Breast epithelium (tissue), 4 donors: ENCODE measurements at regions of chr10 and their contacts with region 1.

Region 1: DNA sequence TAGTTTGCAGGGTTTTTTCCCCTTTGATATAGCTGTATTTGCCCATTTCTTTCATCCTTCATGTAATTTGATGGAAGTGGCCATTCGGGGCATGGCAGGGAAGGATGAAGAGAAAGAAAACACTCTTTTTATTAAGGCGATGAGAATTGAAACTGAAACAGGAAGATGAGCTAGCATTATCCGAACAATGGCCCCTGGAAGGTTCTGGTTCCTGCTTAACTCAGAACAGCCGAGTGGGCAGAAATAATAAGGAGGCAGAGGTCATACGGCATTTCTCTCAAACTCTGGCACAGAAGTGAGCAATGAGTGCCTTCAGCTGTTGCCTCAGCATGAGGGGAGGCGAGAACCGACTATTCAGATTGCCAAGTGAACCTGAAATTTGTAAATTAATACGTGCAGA is 113.2 kb upstream of the MYO3A start:
- DNase-seq: no peak
- H3K4me3 ChIP-seq: peak overlapping the region in 2 of 3 donors; percentile 12 to 43
- H3K27ac ChIP-seq: no peak overlapping the region
- H3K4me1 ChIP-seq: no peaks in the 10 kb centered on the region
- H3K27me3 ChIP-seq: no peaks in the 10 kb centered on the region
- CTCF ChIP-seq: no peak
- POLR2A ChIP-seq: no peak

Region 2: DNA sequence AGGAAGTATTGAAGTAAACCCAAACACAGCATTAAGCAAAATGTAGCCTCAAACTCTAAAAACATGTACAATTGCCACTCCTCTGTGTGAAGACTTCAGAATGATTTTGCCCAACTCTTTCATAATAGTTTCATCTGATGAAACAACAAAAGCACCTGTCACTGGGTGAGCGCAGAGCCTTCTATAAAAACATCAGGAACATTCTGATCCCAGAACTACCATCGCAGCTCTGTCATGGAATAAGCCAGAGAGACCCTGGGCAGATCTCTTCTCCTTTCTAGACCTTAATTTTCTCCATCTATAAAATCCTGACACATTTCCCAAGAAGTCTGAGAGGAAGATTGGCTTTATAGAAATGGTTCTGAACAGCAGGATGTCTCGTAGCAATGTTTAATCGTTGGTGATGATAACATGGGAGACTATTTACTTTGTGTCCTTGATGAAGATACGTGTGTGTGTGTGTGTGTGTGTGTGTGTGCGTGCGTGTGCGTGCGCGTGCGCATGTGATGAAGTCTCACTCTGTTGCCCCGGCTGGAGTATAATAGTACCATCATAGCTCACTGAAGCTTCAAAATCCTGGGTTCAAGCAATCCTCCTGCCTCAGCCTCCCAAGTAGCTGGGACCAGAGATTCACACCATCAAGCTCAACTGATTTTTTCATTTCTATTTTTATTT is 1413.9 kb before region 1 on chr10:
- intact Hi-C with region 1: loop called (anchors 10 kb)
- DNase-seq: no peak
- H3K4me3 ChIP-seq: no peak overlapping the region
- H3K27ac ChIP-seq: peak overlapping the region in 1 of 2 donors; percentile 29
- H3K4me1 ChIP-seq: no peaks in the 10 kb centered on the region
- H3K27me3 ChIP-seq: no peaks in the 10 kb centered on the region
- CTCF ChIP-seq: no peak
- POLR2A ChIP-seq: no peak

Region 3: GRCh38 chr10:25615926-25616325 is 204.9 kb before region 1 on chr10:
- intact Hi-C with region 1: no loop called
- DNase-seq: no peak
- H3K4me3 ChIP-seq: no peak overlapping the region
- H3K27ac ChIP-seq: no peak overlapping the region
- H3K4me1 ChIP-seq: no peaks in the 10 kb centered on the region
- H3K27me3 ChIP-seq: no peaks in the 10 kb centered on the region
- CTCF ChIP-seq: no peak
- POLR2A ChIP-seq: no peak